ENCODE measurements at regions of chr20 and their contacts with region 1.

Region 1: GRCh38 chr20:2752567-2753460 is 47.6 kb downstream of the CPXM1 start:
- DNase-seq: peak; percentile 58
- ATAC-seq: peak; percentile 15
- H3K4me3 ChIP-seq: peak overlapping the region; percentile 48 to 79 (median 67)
- H3K27ac ChIP-seq: no peak overlapping the region
- H3K4me1 ChIP-seq: peaks cover 37% of the 10 kb centered on the region
- H3K27me3 ChIP-seq: peaks cover 15 to 73% of the 10 kb centered on the region in 2 experiments
- CTCF ChIP-seq: peak; percentile 92
- EP300 ChIP-seq: no peak
- POLR2A ChIP-seq: no peak
- RAD21 ChIP-seq: peak; percentile 68

Region 2: GRCh38 chr20:2688041-2688591 is 64.7 kb before region 1 on chr20:
- CTCF ChIA-PET with region 1: interaction called, 5 read pairs
- POLR2A ChIA-PET with region 1: no interaction called
- in situ Hi-C with region 1: loop called (anchors 5 kb)
- intact Hi-C with region 1: no loop called
- DNase-seq: no peak
- ATAC-seq: peak; percentile 31; the same call in 2 of the 3 replicates
- H3K4me3 ChIP-seq: peak overlapping the region in 1 of 3 experiments; percentile 18; a peak in 1 of 6 replicates
- H3K27ac ChIP-seq: no peak overlapping the region
- H3K4me1 ChIP-seq: peaks cover 16% of the 10 kb centered on the region
- H3K27me3 ChIP-seq: peaks cover 15 to 68% of the 10 kb centered on the region in 2 experiments
- CTCF ChIP-seq: peak; percentile 74
- EP300 ChIP-seq: no peak
- POLR2A ChIP-seq: no peak
- RAD21 ChIP-seq: peak; percentile 70

Region 3: DNA sequence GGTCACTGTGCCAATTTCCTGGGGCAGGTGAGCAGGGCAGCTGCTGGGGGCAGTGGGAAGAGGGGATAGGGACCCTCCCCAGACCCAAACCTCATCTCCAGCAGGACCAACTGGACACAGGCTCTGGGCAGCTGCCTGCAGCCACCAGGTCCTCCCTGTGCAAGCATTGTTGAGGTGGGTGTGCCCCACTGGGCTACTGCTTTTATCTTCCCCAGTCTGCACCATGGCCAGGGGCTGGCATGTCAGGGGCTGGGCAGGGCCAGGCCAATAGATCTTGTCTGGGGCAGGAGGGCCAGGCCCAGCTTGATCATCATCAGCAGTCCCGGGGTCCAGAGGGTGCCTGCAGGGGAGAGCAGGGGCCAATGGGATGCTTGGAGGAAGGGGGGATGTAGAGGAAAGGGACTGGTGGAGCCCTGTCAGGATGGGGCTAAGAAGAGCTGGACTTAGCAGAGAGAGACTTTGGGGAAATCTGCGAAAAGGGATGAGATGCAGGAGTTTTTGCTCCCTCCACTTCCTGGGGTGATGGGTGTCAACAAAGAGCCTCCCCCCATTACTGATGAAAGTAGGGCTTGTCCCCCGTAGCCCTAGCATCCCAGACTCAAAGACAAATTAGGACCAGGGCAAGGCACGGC is 54.5 kb before region 1 on chr20:
- CTCF ChIA-PET with region 1: no interaction called
- POLR2A ChIA-PET with region 1: no interaction called
- in situ Hi-C with region 1: no loop called
- intact Hi-C with region 1: no loop called
- DNase-seq: no peak
- ATAC-seq: no peak
- H3K4me3 ChIP-seq: no peak overlapping the region
- H3K27ac ChIP-seq: no peak overlapping the region
- H3K4me1 ChIP-seq: peaks cover 18% of the 10 kb centered on the region; the same call in 1 of the 2 replicates
- H3K27me3 ChIP-seq: peaks cover 39 to 84% of the 10 kb centered on the region in 2 experiments
- CTCF ChIP-seq: no peak
- EP300 ChIP-seq: no peak
- POLR2A ChIP-seq: no peak
- RAD21 ChIP-seq: no peak

Region 4: DNA sequence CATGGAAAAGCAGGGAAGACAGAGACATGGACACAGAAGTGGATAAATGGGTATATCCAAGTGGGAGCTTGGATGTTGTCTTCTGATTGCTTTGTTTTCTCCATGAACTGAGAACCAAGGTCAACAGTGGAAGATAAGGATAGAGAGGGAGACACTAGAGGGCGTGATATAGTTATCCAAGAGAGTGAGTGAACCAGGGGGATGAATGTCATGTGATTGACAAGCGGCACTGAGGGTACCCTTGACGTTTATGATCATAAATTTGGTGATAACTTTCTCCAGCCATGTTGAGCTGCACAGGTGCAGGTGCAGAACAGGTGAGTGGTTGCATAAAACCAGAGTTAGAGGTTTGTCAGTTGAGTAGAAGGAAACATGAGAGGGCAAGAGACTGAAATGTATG is 39.5 kb before region 1 on chr20:
- CTCF ChIA-PET with region 1: interaction called, 7 read pairs
- POLR2A ChIA-PET with region 1: no interaction called
- in situ Hi-C with region 1: no loop called
- intact Hi-C with region 1: loop called (anchors 5 kb)
- DNase-seq: peak; percentile 52
- ATAC-seq: peak; percentile 83
- H3K4me3 ChIP-seq: no peak overlapping the region
- H3K27ac ChIP-seq: no peak overlapping the region
- H3K4me1 ChIP-seq: no peaks in the 10 kb centered on the region
- H3K27me3 ChIP-seq: peaks cover 6 to 27% of the 10 kb centered on the region in 2 experiments; a peak in 3 of 5 replicates
- CTCF ChIP-seq: peak; percentile 82
- EP300 ChIP-seq: no peak
- POLR2A ChIP-seq: no peak
- RAD21 ChIP-seq: 0 out of 2 replicates have a peak, but pooled peaks have one; percentile 25

Region 5: GRCh38 chr20:2840138-2840966 is 87.5 kb after region 1 on chr20 and contains the starts of genes PCED1A and VPS16:
- CTCF ChIA-PET with region 1: no interaction called
- POLR2A ChIA-PET with region 1: interaction called, 3 read pairs
- in situ Hi-C with region 1: loop called (anchors 10 kb)
- intact Hi-C with region 1: no loop called
- DNase-seq: peak; percentile 84
- ATAC-seq: peak; percentile 99
- H3K4me3 ChIP-seq: peak within 1 kb of the TSS; percentile 71 to 97 (median 74)
- H3K27ac ChIP-seq: peak within 1 kb of the TSS; percentile 76
- H3K4me1 ChIP-seq: peaks cover 37% of the 10 kb centered on the region
- H3K27me3 ChIP-seq: no peaks in the 10 kb centered on the region; a peak in 1 of 5 replicates
- CTCF ChIP-seq: peak; percentile 18; the same call in 1 of the 2 replicates
- EP300 ChIP-seq: no peak
- POLR2A ChIP-seq: peak; percentile 89 to 93
- RAD21 ChIP-seq: peak; percentile 81
- total RNA-seq, gene PCED1A: 12.6 and 40.1 TPM in 2 replicates
- total RNA-seq, gene VPS16: 27.6 and 35.4 TPM in 2 replicates

Region 6: DNA sequence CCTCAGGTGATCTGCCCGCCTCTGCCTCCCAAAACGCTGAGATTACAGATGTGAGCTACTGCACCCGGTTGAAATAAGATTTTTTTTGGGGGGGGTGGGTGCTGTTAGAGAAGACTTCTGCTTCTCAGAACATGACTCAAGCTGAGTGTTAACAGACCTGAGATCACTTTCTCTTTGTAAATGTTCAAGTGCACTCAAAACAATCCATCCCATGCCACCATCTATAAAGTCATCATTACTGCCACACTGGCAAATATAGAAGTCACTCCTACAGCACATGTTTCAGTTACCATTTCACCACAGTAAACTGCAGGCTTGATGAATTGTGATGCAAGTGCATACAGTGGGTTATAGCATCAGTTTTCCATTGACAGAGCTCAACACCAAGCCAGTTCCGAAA is 96.7 kb after region 1 on chr20:
- CTCF ChIA-PET with region 1: interaction called, 27 read pairs
- POLR2A ChIA-PET with region 1: no interaction called
- in situ Hi-C with region 1: loop called (anchors 10 kb)
- intact Hi-C with region 1: loop called (anchors 1 kb)
- DNase-seq: no peak
- ATAC-seq: no peak
- H3K4me3 ChIP-seq: no peak overlapping the region
- H3K27ac ChIP-seq: no peak overlapping the region
- H3K4me1 ChIP-seq: no peaks in the 10 kb centered on the region
- H3K27me3 ChIP-seq: no peaks in the 10 kb centered on the region
- CTCF ChIP-seq: no peak
- EP300 ChIP-seq: no peak
- POLR2A ChIP-seq: no peak
- RAD21 ChIP-seq: no peak

Region 7: GRCh38 chr20:2859330-2860121 is 106.7 kb after region 1 on chr20:
- CTCF ChIA-PET with region 1: no interaction called
- POLR2A ChIA-PET with region 1: no interaction called
- in situ Hi-C with region 1: loop called (anchors 5 kb)
- intact Hi-C with region 1: no loop called
- DNase-seq: no peak
- ATAC-seq: no peak
- H3K4me3 ChIP-seq: no peak overlapping the region
- H3K27ac ChIP-seq: no peak overlapping the region
- H3K4me1 ChIP-seq: no peaks in the 10 kb centered on the region
- H3K27me3 ChIP-seq: no peaks in the 10 kb centered on the region
- CTCF ChIP-seq: no peak
- EP300 ChIP-seq: no peak
- POLR2A ChIP-seq: no peak
- RAD21 ChIP-seq: no peak